Dorsolateral prefrontal cortex (tissue), 120 donors: ENCODE measurements at regions of chr14 and their contacts with region 1.

Region 1: GRCh38 chr14:64681796-64682710 is 22.2 kb upstream of the PLEKHG3 start:
- DNase-seq: peak; percentile 44 to 77 (median 70)
- H3K4me3 ChIP-seq: peak overlapping the region in 36 of 59 donors; percentile 1 to 50 (median 19)
- H3K27ac ChIP-seq: peak overlapping the region; percentile 85 to 99 (median 96)
- H3K27me3 ChIP-seq: no peaks in the 10 kb centered on the region
- CTCF ChIP-seq: peak in 1 of 56 donors; percentile 7

Region 2: GRCh38 chr14:64515083-64515482 is 167.0 kb before region 1 on chr14:
- intact Hi-C with region 1: no loop called
- DNase-seq: no peak
- H3K4me3 ChIP-seq: no peak overlapping the region
- H3K27ac ChIP-seq: no peak overlapping the region
- H3K27me3 ChIP-seq: no peaks in the 10 kb centered on the region
- CTCF ChIP-seq: no peak

Region 3: GRCh38 chr14:64569184-64569631 is 112.8 kb before region 1 on chr14:
- intact Hi-C with region 1: no loop called
- DNase-seq: peak in 9 of 10 donors; percentile 34 to 81 (median 56)
- H3K4me3 ChIP-seq: peak overlapping the region in 1 of 59 donors; percentile 13
- H3K27ac ChIP-seq: peak overlapping the region in 57 of 59 donors; percentile 8 to 99 (median 83)
- H3K27me3 ChIP-seq: no peaks in the 10 kb centered on the region
- CTCF ChIP-seq: peak in 2 of 56 donors; percentile 26

Region 4: DNA sequence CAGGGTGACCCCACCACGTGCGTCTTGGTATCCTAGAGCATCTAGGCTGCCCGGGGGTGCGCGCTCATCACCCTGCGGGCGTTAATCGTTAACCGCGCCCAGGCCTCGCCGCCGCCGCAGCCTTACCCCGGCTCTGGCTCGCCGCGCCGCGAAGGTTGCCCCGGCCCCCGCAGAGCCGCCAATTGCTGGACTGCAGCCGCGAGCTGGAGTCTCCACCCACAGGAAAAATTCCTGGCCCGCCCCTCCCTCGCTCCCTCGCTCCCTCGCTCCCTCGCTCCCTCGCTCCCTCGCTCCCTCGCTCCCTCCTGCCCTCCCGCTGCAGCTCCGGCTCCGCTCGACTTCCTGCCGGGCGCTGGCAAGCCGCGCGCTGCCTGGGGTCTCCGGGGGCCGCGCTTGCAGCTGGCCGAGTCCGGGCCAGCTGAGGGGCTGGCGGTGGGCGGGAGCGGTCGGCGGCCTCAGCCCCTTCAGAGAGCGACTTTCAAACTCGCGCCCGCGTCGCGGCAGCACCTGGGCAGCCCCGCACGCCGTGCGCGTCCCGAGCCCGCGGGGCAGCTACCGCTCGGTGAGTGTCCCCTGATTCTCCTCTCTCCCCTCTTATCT is 22.2 kb after region 1 on chr14 and contains the start of gene PLEKHG3:
- intact Hi-C with region 1: loop called (anchors 1 kb)
- DNase-seq: peak; percentile 67 to 90 (median 80)
- H3K4me3 ChIP-seq: peak within 1 kb of the TSS; percentile 45 to 96 (median 85)
- H3K27ac ChIP-seq: peak within 1 kb of the TSS; percentile 84 to 99 (median 96)
- H3K27me3 ChIP-seq: no peaks in the 10 kb centered on the region
- CTCF ChIP-seq: peak in 41 of 56 donors; percentile 5 to 52 (median 23)
- total RNA-seq, gene PLEKHG3: 27.1 to 361 (median 85.0) TPM

Region 5: GRCh38 chr14:64715628-64716412 is 33.8 kb after region 1 on chr14:
- intact Hi-C with region 1: loop called in 1 of 2 experiments (anchors 5 kb)
- DNase-seq: peak in 7 of 10 donors; percentile 35 to 73 (median 62)
- H3K4me3 ChIP-seq: peak overlapping the region; percentile 29 to 73 (median 55)
- H3K27ac ChIP-seq: peak overlapping the region; percentile 60 to 99 (median 93)
- H3K27me3 ChIP-seq: no peaks in the 10 kb centered on the region
- CTCF ChIP-seq: peak in 2 of 56 donors; percentile 16 to 19

Region 6: GRCh38 chr14:65267856-65268255 is 585.8 kb after region 1 on chr14:
- intact Hi-C with region 1: no loop called
- DNase-seq: no peak
- H3K4me3 ChIP-seq: no peak overlapping the region
- H3K27ac ChIP-seq: peak overlapping the region in 17 of 59 donors; percentile 2 to 69 (median 47)
- H3K27me3 ChIP-seq: no peaks in the 10 kb centered on the region
- CTCF ChIP-seq: no peak